Activated T-helper 2 cell treated with anti-CD3 and anti-CD28 coated beads, Interferon-gamma antibody, Interleukin-2, Interleukin-4, amounts not matched to agents 10 μg/mL and 5 μg/mL and 100 μg/mL, durations not matched to agents 14 hours and 24 hours and 36 hours (primary cell): ENCODE measurements at regions of chr16 and their contacts with region 1.

Region 1: GRCh38 chr16:50152807-50153452 is at the start of gene TENT4B:
- DNase-seq: peak; percentile 90
- H3K4me3 Mint-ChIP-seq: peak within 1 kb of the TSS; percentile 90
- H3K27ac Mint-ChIP-seq: peak within 1 kb of the TSS; percentile 96
- H3K4me1 Mint-ChIP-seq: peaks cover 31% of the 10 kb centered on the region
- H3K27me3 Mint-ChIP-seq: no peaks in the 10 kb centered on the region
- total RNA-seq, gene TENT4B: 15.9 and 16.8 TPM in 2 replicates

Region 2: DNA sequence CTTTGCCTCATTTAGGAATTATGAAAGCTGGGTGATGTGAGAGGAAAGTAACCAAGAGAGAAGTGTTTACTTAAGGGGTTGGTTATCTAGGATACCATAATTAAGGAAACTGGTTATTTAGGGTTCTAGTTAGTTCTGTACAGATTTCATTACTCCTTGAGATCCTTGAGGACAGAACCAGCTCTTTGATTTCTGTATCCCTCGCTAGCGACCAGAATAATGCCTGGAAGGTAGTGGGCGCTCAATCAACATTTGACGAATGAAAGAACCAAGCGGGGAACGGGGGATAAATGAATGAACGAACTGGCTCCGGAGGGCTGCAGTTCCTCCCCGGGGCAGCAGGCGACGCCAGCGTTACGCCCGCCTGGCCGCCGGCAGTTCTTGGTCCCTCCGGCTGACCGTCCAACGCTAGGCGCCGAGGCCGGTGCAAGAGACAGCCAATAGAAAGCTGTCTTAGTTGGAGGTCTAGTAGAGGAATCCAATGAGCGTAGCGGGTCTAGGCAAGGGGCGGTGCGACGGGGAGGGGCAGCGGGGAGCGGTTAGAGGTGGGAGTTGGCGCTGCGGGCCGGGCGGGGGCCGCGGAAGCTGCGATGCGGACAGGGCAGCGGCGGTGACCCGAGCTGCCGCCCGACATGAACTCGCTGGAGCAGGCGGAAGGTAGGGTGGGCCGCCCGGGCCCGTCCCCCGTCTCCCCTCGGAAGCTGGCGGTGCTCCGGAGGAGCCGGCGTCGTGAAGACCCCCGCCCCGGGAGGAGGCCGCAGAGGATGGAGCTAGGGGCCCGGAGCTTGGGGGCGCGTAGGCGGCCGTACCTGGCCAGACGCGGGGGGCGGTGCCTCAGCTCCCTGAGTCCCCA is 128.0 kb before region 1 on chr16 and contains the start of gene CNEP1R1:
- intact Hi-C with region 1: loop called (anchors 1 kb)
- DNase-seq: peak; percentile 93
- H3K4me3 Mint-ChIP-seq: peak within 1 kb of the TSS; percentile 95
- H3K27ac Mint-ChIP-seq: peak within 1 kb of the TSS; percentile 84
- H3K4me1 Mint-ChIP-seq: peaks cover 18% of the 10 kb centered on the region
- H3K27me3 Mint-ChIP-seq: peaks cover 4% of the 10 kb centered on the region
- total RNA-seq, gene CNEP1R1: 23.4 and 26.1 TPM in 2 replicates

Region 3: DNA sequence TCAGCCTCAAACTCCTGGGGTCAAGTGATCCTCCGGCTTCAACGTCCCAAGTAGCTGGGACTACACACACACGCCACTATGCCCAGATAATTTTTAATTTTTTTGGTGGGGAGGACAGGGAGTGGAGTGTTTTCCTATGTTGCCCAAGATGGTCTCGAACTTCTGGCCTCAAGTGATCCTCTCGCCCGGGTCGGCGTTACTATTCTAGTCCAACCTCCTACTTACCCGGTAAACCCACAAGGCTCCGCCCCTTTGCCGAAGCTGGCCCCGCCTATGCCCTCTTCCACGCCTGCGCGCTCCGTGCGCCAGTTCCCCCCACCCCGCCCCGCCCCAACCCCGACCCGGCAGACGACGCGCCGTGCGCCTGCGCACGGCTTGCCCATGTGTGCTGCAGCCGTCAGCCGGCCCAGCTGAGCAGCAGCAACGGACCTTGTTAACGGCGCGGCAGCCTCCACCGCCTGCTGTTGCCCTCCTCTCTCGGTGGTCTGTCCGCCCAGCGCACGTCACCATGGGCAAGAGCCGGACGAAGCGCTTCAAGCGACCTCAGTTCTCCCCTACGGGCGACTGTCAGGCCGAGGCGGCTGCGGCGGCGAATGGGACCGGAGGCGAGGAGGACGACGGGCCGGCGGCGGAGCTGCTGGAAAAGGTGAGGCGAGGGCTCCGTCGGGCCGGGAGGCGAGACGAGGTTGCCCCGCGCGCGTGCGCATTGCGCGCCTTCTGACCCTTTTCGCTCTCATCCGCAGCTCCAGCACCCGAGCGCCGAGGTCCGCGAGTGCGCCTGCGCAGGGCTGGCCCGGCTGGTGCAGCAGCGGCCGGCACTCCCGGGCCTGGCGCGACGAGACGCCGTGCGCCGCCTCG is 87.1 kb before region 1 on chr16 and contains the start of gene HEATR3:
- intact Hi-C with region 1: loop called (anchors 1 kb)
- DNase-seq: peak; percentile 94
- H3K4me3 Mint-ChIP-seq: peak within 1 kb of the TSS; percentile 87
- H3K27ac Mint-ChIP-seq: peak within 1 kb of the TSS; percentile 92
- H3K4me1 Mint-ChIP-seq: peaks cover 32% of the 10 kb centered on the region
- H3K27me3 Mint-ChIP-seq: no peaks in the 10 kb centered on the region
- total RNA-seq, gene HEATR3: 24.9 and 25.9 TPM in 2 replicates

Region 4: DNA sequence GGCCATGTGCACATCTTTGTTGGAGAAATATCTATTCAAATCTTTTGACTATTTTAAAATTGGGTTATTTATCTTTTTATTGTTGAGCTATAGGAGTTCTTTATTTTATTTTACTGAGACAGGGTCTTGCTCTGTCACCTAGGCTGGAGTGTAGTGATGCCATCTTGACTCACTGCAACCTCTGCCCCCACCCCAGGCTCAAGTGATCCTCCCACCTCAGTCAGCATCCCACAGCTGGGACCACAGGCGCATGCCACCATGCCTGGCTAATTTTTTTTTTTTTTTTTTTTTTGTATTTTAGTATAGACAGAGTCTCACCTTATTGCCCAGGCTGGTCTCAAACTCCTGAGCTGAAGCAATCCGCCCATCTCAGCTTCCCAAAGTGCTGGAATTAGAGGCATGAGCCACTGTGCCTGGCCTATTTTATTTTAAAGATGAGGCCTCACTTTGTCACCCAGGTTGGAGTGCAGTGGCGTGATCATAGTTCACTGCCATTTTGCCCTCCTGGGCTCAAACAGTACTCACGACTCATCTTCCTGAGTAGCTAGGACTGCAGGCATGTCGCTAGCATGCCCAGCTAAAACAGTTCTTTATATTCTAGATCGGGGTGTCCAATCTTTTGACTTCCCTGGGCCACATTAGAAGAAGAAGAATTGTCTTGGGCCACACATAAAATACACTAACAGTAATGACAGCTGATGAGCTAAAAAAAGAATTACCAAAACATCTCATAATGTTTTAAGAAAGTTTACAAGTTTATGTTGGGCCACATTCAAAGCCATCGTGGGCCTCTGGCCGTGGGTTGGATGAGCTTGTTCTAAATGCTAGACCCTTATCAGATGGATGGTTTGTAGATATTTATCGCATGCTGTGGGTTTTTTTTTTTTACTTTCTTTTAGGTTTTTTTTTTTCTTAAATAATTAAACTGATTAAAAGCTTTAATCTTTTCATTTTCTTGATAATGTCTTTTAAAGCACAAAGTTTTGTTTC is 13.9 kb after region 1 on chr16:
- intact Hi-C with region 1: loop called (anchors 2 kb)
- DNase-seq: no peak
- H3K4me3 Mint-ChIP-seq: peak overlapping the region; percentile 28
- H3K27ac Mint-ChIP-seq: peak overlapping the region; percentile 86
- H3K4me1 Mint-ChIP-seq: peaks cover 48% of the 10 kb centered on the region
- H3K27me3 Mint-ChIP-seq: no peaks in the 10 kb centered on the region

Region 5: DNA sequence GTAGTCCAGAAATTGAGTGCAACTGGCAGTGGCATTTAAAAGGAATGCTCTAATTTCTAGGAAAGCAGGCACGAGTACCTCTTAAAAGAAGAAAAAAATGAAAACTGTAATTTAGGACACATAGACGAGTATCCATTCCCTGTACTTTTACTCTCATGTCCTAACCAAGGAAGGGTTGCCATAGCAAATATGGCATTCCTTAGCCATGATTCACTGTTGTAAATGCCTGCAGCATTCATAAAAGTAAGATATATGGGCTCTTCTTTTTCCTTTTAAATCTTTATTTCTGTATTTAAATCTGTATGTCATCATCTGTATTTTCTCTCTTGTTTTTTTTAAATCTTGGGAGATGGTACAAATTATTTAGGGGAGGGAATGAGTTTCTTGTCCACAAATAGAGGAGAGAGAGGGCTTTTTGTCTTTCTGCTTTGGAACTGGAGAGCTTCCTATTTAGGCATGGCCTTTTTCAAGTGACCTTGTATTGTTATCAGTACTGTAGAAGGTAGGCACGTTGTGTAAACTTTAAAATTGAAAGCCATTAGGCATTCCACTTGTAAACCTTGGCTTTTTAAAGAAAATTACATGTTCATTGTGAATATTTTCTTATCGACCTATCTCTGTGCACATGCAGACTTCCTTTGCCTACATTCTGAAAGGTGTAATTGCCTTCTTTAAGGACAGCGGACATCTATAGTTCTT is 50.1 kb after region 1 on chr16:
- intact Hi-C with region 1: loop called (anchors 2 kb)
- DNase-seq: no peak
- H3K4me3 Mint-ChIP-seq: no peak overlapping the region
- H3K27ac Mint-ChIP-seq: no peak overlapping the region
- H3K4me1 Mint-ChIP-seq: peaks cover 29% of the 10 kb centered on the region
- H3K27me3 Mint-ChIP-seq: no peaks in the 10 kb centered on the region

Region 6: DNA sequence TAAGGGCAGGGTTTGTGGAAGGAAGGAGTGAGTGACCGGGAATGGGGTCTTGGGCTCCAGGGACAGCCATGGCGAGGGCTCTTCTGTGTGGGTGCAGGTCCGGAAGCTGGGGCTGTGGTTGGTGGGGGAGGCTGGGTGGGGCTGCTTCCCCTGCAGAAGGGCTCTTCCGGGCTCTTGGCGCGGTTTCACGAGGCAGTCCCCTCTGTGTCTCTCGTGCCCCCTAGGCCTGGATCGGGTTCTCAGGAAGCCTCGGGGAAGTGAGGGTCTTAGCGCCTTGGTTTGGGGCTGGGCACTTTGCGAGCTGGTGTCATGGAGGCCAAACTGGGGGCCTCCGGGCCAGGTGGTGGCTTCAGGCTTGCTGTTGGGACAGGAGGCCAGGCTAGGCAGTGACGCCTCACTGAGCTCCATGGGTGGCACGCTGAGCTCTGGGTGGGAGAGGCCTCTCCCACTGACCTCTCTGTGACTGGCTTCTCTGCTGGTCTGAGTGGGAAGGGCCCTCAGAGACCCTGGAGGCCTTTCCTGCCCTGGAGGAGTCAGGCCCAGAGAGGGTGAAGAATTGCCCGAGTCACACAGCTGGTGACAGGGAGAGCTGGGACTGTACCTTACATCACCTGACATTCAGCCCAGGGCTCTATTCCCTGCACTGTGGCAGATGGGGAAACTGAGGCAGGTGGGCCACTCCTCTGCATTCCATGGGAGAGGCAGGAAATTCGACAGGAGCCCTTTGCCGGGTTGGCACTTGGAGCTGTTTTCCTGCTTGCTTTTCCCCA is 121.6 kb after region 1 on chr16:
- intact Hi-C with region 1: loop called (anchors 5 kb)
- DNase-seq: peak; percentile 43
- H3K4me3 Mint-ChIP-seq: peak overlapping the region; percentile 92
- H3K27ac Mint-ChIP-seq: peak overlapping the region; percentile 98
- H3K4me1 Mint-ChIP-seq: peaks cover 63% of the 10 kb centered on the region
- H3K27me3 Mint-ChIP-seq: no peaks in the 10 kb centered on the region

Region 7: DNA sequence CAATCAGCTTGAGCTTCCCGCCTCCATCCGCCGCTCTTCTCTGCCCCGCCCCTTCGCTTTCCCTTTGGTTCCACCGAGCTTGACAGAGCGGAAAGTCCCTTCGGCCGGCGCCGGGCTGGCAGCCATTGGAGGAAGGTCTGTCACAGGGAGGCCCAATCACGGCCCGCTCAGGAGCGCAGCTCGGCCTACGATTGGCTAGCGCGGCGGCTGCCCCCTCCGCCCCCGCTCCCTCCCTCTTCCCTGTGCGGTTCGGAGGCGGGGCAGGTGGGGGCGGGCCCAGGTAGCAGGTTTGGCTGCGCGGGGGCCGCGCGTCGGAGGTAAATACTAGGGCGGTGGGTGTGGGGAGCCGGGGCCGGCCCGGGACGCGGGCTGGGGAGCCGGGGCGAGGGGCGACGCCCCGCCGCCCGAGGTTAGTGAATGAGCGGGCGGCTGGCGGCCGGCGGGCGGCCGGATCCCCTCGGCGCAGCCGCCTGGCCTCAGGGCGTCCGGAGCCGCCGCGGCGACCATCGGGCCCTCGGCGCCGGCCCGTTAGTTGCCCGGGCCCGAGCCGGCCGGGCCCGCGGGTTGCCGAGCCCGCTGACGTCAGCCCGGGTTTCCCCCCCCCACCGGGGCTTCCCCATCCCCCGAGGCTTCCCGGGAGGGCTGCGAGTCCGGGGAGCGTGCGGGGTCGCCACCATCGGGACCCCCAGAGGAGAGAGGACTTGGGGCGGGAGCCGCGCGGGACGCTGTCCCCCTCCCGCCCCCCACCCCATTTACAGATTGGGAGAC is 589.1 kb after region 1 on chr16 and contains the start of gene CYLD:
- intact Hi-C with region 1: loop called (anchors 2 kb)
- DNase-seq: peak; percentile 100
- H3K4me3 Mint-ChIP-seq: peak within 1 kb of the TSS; percentile 90
- H3K27ac Mint-ChIP-seq: peak within 1 kb of the TSS; percentile 95
- H3K4me1 Mint-ChIP-seq: peaks cover 43% of the 10 kb centered on the region
- H3K27me3 Mint-ChIP-seq: no peaks in the 10 kb centered on the region
- total RNA-seq, gene CYLD: 189 and 201 TPM in 2 replicates